ENCODE measurements at regions of chr7 and their contacts with region 1.

Region 1: GRCh38 chr7:81447351-81447952 is 322.4 kb downstream of the HGF start:
- DNase-seq: no peak
- ATAC-seq: peak in 1 of 4 donors; percentile 53
- H3K4me3 ChIP-seq: no peak overlapping the region
- H3K27ac ChIP-seq: no peak overlapping the region
- H3K4me1 ChIP-seq: no peaks in the 10 kb centered on the region
- H3K27me3 ChIP-seq: no peaks in the 10 kb centered on the region
- CTCF ChIP-seq: peak in 7 of 12 donors; percentile 7 to 37 (median 29)
- POLR2A ChIP-seq: no peak

Region 2: DNA sequence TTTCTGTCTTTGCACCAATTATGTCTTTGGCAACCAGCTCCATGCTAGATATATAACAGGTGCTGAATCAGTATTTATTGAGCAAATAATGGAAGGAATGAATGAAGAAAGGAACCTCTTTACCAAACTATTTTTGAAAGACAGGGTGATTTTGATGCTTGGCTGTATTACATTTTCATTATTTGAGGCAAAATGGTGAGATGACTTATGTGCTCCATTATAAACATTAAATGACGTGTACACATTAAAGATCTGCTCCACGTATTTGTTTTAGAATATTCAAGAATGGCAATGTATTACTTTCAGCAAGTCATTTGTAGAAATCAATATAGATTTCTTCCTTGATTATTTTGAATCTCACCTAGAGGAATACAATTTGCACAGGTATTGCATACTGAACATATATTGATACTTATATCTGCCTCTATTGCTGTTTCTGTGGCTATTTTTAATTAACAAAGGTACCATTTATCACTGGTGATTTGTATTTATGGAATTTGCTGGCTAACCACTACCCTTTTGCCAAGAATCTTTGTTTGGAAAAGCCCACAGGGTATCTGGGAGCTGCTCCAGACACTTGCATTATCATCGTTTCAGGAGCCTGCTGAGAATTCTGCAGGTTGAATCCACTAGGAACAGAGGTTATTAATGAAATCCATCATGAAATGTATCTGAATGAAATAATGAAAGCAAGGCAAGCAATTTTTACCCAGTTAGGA is 620.8 kb before region 1 on chr7:
- intact Hi-C with region 1: loop called in 1 of 10 experiments (anchors 10 kb)
- DNase-seq: no peak
- ATAC-seq: peak in 1 of 4 donors; percentile 34
- H3K4me3 ChIP-seq: no peak overlapping the region
- H3K27ac ChIP-seq: peak overlapping the region in 3 of 12 donors; percentile 1 to 28 (median 9)
- H3K4me1 ChIP-seq: peaks cover 0 to 40% (median 15%) of the 10 kb centered on the region in 12 donors
- H3K27me3 ChIP-seq: no peaks in the 10 kb centered on the region
- CTCF ChIP-seq: no peak
- POLR2A ChIP-seq: no peak

Measured in heart left ventricle (tissue), 16 donors.